Activated CD8-positive, alpha-beta memory T cell treated with anti-CD3 and anti-CD28 coated beads, Interleukin-2, amount 10 ng/mL, durations not matched to agents 7 days and 5 days (primary cell): ENCODE measurements at regions of chr7 and their contacts with region 1.

Region 1: GRCh38 chr7:30938435-30939316 is 25.1 kb upstream of the GHRHR start:
- DNase-seq: peak; percentile 73
- ATAC-seq: peak; percentile 63
- H3K4me3 Mint-ChIP-seq: no peak overlapping the region
- H3K27ac Mint-ChIP-seq: no peak overlapping the region
- H3K4me1 Mint-ChIP-seq: no peaks in the 10 kb centered on the region
- H3K27me3 Mint-ChIP-seq: peaks cover 43% of the 10 kb centered on the region

Region 2: DNA sequence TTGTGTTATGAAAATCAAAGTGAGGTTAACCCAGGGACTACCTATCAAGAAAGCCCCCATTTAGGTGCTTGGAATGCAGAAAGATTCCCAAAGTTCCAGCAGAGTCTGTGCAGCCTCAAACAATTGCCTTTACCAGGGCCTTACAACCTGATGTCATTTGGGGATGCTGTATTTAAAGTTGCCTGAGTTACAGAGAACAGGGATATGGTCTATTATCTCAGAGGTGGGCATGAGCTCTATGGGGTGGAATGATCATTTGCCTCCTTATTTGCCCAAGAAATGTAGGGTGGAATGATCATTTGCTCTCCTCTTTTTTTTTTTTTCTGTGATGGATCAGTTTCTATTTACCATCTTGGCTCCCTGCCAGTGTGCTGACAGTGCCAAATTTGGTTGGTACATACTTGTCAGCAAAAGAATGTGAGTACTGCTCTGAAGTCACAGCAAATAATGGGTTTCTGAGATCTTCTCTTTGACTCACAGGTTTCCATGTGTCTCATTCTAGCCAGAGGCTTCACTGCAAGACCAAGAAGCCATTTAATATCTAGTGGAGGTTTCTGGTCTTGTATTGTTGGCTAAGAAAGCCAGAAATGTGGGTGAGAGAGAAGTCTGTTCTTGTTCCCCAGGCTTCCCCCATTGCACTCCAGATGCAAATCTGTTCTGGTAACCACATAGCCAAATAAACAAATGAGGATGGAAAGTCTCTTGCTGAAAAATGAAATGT is 699.8 kb before region 1 on chr7:
- CTCF ChIA-PET with region 1: no interaction called
- DNase-seq: no peak
- ATAC-seq: no peak
- H3K4me3 Mint-ChIP-seq: no peak overlapping the region
- H3K27ac Mint-ChIP-seq: no peak overlapping the region
- H3K4me1 Mint-ChIP-seq: peaks cover 13% of the 10 kb centered on the region
- H3K27me3 Mint-ChIP-seq: peaks cover 18% of the 10 kb centered on the region

Region 3: DNA sequence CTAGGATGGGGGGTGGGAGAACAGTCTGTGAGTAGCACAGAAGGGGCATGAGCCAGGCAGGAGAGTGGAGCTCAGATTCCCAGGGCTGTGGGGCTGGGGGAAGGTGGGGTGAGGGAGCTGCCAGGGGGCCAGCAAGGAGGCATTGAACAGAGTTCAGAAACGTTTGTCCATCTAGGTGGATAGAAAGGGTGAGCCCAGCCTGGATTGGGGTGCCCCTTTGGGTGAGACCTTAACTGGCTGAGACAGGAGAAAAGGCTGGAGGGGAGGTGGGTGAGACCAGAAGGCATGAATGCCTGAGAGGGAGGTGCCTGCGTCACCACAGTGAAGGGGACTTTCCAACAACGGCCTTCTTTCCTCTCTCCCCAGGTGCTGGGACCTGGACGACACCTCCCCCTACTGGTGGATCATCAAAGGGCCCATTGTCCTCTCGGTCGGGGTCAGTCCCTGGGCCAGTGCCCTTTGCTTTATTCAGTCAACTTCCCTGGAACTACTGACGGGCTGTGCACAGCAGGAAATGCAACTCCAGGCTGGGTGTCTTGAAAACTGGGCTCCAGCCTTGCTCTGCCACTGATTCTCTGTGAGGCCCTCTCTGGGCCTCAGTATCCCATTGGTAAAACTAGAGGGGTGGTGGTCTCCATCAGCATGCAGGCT is 36.1 kb after region 1 on chr7:
- CTCF ChIA-PET with region 1: interaction called, 12 read pairs
- DNase-seq: peak; percentile 77
- ATAC-seq: peak; percentile 84
- H3K4me3 Mint-ChIP-seq: no peak overlapping the region
- H3K27ac Mint-ChIP-seq: no peak overlapping the region
- H3K4me1 Mint-ChIP-seq: peaks cover 7% of the 10 kb centered on the region
- H3K27me3 Mint-ChIP-seq: peaks cover 20% of the 10 kb centered on the region